ENCODE measurements at regions of chr6 and their contacts with region 1.

Region 1: DNA sequence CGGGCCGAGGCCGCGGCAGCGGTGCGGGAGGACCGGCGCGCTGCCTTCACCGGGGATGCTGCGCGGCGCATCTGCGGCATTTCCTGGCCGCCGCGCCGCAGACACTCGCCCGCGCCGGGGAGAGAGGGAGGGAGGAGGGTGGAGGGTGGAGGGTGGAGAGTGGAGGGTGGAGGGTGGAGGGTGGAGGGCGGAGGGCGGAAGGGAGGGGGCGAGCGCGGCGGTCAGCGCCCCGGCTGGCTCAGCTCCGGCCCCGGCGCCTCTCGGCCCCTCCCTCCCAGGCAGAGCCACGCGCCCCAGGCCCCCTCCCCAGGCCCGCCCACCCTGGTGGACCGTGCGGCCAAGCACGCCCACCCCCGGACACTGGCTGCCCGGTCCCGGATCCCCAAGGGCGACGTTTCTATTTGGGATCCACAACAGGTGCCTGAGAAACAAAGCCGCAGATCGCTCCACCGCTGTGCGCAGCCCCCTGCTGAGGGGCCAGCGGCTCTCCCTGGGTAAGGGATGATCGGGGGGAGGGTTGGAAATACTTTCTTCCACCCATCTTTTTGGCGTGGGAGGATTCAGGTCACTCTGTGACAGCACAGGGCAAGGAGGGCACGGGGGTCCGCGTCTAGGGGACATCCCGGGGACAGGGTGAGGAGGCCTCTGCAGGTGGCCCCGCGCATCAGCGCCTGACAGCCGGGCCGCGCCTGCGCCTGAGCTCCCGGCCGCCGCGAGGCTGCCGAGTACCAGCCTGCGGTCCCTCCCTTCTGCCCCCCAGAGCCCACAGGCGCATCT is 111.1 kb upstream of the BEND6 start:
- DNase-seq: peak; percentile 74 to 89
- ATAC-seq: peak; percentile 64 to 66
- H3K4me3 ChIP-seq: peak overlapping the region; percentile 64 to 90 (median 89)
- H3K27ac ChIP-seq: peak overlapping the region; percentile 85 to 98 (median 98)
- H3K4me1 ChIP-seq: peaks cover 31 to 41% of the 10 kb centered on the region in 2 donors
- H3K27me3 ChIP-seq: no peaks in the 10 kb centered on the region
- CTCF ChIP-seq: peak; percentile 71 to 86 (median 79)
- POLR2A ChIP-seq: peak; percentile 90 to 94

Region 2: DNA sequence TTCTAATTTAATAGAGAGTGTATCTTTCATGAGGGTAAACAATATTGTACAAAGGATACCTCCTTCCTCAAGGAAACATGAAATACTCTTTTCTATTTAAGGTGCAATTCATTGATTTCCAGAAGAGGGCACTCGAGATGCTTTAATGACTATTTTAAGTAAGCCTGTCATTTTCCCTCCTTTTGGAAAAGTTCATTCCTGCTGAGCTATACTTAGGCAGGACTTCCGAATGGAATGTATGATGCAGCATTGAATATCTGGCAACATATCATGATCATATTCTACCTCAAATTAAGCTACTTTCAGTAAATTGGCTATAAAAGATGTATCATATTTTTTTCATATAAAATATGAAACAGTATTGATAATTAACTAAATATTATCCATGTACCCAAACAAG is 206.1 kb before region 1 on chr6:
- in situ Hi-C with region 1: loop called in 3 of 4 experiments (anchors 5 to 10 kb)
- intact Hi-C with region 1: no loop called
- DNase-seq: no peak
- ATAC-seq: peak; percentile 53 to 82
- H3K4me3 ChIP-seq: no peak overlapping the region
- H3K27ac ChIP-seq: peak overlapping the region in 2 of 4 donors; percentile 12 to 27
- H3K4me1 ChIP-seq: peaks cover 0 to 7% of the 10 kb centered on the region in 2 donors
- H3K27me3 ChIP-seq: no peaks in the 10 kb centered on the region
- CTCF ChIP-seq: peak; percentile 64 to 85 (median 78)
- POLR2A ChIP-seq: no peak

Region 3: GRCh38 chr6:56699066-56699654 is 144.6 kb before region 1 on chr6:
- in situ Hi-C with region 1: loop called in 3 of 4 experiments (anchors 5 to 10 kb)
- intact Hi-C with region 1: loop called (anchors 5 kb)
- DNase-seq: no peak
- ATAC-seq: peak; percentile 44 to 68
- H3K4me3 ChIP-seq: no peak overlapping the region
- H3K27ac ChIP-seq: peak overlapping the region in 1 of 4 donors; percentile 89
- H3K4me1 ChIP-seq: peaks cover 14 to 19% of the 10 kb centered on the region in 2 donors
- H3K27me3 ChIP-seq: no peaks in the 10 kb centered on the region
- CTCF ChIP-seq: peak; percentile 55 to 79 (median 65)
- POLR2A ChIP-seq: no peak

Region 4: DNA sequence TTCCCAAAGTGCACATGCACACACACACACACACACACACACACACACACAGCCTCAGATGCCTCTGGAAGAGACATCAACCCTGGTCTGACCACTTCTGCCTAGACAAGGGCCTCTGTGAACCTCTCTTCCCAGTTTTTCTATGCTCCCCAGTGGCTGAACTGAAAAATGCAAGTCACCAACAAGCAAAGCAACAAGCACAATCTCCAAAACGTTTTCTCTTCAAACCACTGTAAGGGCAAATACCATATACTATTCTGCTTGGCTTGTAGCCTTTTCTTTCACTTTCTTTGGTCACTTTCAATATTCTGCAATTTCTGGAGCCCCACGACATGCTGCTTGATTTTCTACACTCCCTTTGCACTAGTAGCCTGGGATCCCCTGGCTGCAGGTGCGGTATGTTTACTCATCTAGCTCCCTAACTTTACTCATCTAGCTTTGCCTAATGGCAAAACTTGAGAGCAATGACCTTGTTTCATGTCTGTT is 79.6 kb before region 1 on chr6:
- in situ Hi-C with region 1: loop called in 3 of 4 experiments (anchors 5 to 10 kb)
- intact Hi-C with region 1: loop called (anchors 1 kb)
- DNase-seq: no peak
- ATAC-seq: peak in 1 of 2 donors; percentile 79
- H3K4me3 ChIP-seq: no peak overlapping the region
- H3K27ac ChIP-seq: peak overlapping the region; percentile 6 to 88 (median 72)
- H3K4me1 ChIP-seq: peaks cover 54 to 73% of the 10 kb centered on the region in 2 donors
- H3K27me3 ChIP-seq: no peaks in the 10 kb centered on the region
- CTCF ChIP-seq: peak in 4 of 5 experiments; percentile 23 to 51 (median 40)
- POLR2A ChIP-seq: no peak

Region 5: DNA sequence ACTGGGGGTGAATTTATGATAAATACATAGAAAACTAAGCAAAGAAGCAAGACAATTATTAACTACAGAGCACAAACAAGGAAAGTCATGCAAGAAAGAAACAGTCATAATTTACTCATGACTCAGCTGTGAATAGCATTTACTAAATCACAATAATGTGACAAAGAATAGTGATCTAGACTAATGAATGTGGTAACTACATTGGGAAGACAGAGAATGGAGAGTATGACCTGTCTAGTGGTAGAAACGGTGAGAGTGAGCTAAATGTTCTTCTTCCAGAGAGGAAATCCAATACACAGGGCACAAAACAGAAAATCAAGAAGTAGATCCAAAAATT is 47.6 kb before region 1 on chr6:
- in situ Hi-C with region 1: no loop called
- intact Hi-C with region 1: loop called (anchors 2 kb)
- DNase-seq: no peak
- ATAC-seq: no peak
- H3K4me3 ChIP-seq: no peak overlapping the region
- H3K27ac ChIP-seq: peak overlapping the region; percentile 78 to 93 (median 86)
- H3K4me1 ChIP-seq: peaks cover 79 to 82% of the 10 kb centered on the region in 2 donors
- H3K27me3 ChIP-seq: no peaks in the 10 kb centered on the region
- CTCF ChIP-seq: no peak
- POLR2A ChIP-seq: no peak